GM18951 (cell line): ENCODE measurements at regions of chr7 and their contacts with region 1.

Region 1: DNA sequence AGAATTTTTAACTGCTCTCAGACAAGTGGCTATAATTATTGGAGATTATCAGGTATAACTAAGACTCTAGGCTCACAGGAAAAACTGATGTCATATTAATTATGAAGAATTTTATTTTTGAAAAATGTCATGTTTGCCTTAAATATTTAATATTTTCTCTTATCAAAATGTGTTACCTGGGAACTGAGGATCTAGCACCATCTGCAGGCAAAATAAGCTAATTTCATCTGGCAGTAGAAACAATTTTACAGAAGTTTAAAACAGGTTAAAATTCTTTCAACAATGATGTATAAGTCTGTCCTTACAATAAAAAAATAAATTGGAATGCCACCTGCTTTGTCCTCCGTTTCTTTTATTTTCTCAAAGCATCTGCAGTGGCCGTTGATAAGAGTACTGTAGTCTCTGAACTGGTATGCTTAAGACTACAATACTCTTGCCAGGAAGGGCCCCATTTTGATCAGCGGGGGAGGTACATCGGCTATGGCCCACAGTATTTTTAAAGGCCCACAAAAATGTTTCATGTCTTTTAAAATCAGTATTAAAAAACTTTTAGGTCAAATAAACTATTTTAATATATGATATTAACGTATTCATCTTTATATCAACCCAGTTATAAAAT is 81.3 kb downstream of the VWDE start:
- POLR2A ChIP-seq: no peak

Region 2: GRCh38 chr7:12067141-12067831 is 255.1 kb before region 1 on chr7:
- in situ Hi-C with region 1: loop called (anchors 5 kb)
- POLR2A ChIP-seq: no peak